MCF 10A (cell line): ENCODE measurements at regions of chr5 and their contacts with region 1.

Region 1: GRCh38 chr5:142713121-142713706 is 27.3 kb upstream of the FGF1 start:
- DNase-seq: peak; percentile 95
- H3K4me3 Mint-ChIP-seq: peak overlapping the region; percentile 77
- H3K27ac Mint-ChIP-seq: peak overlapping the region; percentile 10
- H3K4me1 Mint-ChIP-seq: peaks cover 19% of the 10 kb centered on the region
- H3K27me3 Mint-ChIP-seq: no peaks in the 10 kb centered on the region
- CTCF ChIP-seq: peak; percentile 99

Region 2: GRCh38 chr5:142627383-142628255 is 85.6 kb before region 1 on chr5:
- CTCF ChIA-PET with region 1: interaction called, 18 read pairs
- POLR2A ChIA-PET with region 1: interaction called, 3 read pairs
- intact Hi-C with region 1: no loop called
- DNase-seq: peak; percentile 42
- H3K4me3 Mint-ChIP-seq: no peak overlapping the region
- H3K27ac Mint-ChIP-seq: no peak overlapping the region
- H3K4me1 Mint-ChIP-seq: no peaks in the 10 kb centered on the region
- H3K27me3 Mint-ChIP-seq: no peaks in the 10 kb centered on the region
- CTCF ChIP-seq: no peak

Region 3: GRCh38 chr5:142685418-142686209 is 27.6 kb before region 1 on chr5 and contains the start of gene FGF1:
- CTCF ChIA-PET with region 1: interaction called, 1,243 read pairs
- POLR2A ChIA-PET with region 1: interaction called, 6 read pairs
- intact Hi-C with region 1: no loop called
- DNase-seq: peak; percentile 89
- H3K4me3 Mint-ChIP-seq: peak within 1 kb of the TSS; percentile 7
- H3K27ac Mint-ChIP-seq: peak within 1 kb of the TSS; percentile 70
- H3K4me1 Mint-ChIP-seq: peaks cover 43% of the 10 kb centered on the region
- H3K27me3 Mint-ChIP-seq: no peaks in the 10 kb centered on the region
- CTCF ChIP-seq: no peak
- total RNA-seq, gene FGF1: 0.34 and 0.65 TPM in 2 replicates

Region 4: GRCh38 chr5:142748568-142749249 is 35.5 kb after region 1 on chr5:
- CTCF ChIA-PET with region 1: interaction called, 253 read pairs
- POLR2A ChIA-PET with region 1: interaction called, 4 read pairs
- intact Hi-C with region 1: loop called (anchors 1 kb)
- DNase-seq: peak; percentile 84
- H3K4me3 Mint-ChIP-seq: no peak overlapping the region
- H3K27ac Mint-ChIP-seq: peak overlapping the region; percentile 20
- H3K4me1 Mint-ChIP-seq: peaks cover 44% of the 10 kb centered on the region
- H3K27me3 Mint-ChIP-seq: no peaks in the 10 kb centered on the region
- CTCF ChIP-seq: peak; percentile 87

Region 5: GRCh38 chr5:142860270-142860669 is 147.1 kb after region 1 on chr5:
- CTCF ChIA-PET with region 1: interaction called, 61 read pairs
- POLR2A ChIA-PET with region 1: interaction called, 3 read pairs
- intact Hi-C with region 1: no loop called
- DNase-seq: no peak
- H3K4me3 Mint-ChIP-seq: no peak overlapping the region
- H3K27ac Mint-ChIP-seq: no peak overlapping the region
- H3K4me1 Mint-ChIP-seq: peaks cover 22% of the 10 kb centered on the region
- H3K27me3 Mint-ChIP-seq: no peaks in the 10 kb centered on the region
- CTCF ChIP-seq: no peak

Region 6: DNA sequence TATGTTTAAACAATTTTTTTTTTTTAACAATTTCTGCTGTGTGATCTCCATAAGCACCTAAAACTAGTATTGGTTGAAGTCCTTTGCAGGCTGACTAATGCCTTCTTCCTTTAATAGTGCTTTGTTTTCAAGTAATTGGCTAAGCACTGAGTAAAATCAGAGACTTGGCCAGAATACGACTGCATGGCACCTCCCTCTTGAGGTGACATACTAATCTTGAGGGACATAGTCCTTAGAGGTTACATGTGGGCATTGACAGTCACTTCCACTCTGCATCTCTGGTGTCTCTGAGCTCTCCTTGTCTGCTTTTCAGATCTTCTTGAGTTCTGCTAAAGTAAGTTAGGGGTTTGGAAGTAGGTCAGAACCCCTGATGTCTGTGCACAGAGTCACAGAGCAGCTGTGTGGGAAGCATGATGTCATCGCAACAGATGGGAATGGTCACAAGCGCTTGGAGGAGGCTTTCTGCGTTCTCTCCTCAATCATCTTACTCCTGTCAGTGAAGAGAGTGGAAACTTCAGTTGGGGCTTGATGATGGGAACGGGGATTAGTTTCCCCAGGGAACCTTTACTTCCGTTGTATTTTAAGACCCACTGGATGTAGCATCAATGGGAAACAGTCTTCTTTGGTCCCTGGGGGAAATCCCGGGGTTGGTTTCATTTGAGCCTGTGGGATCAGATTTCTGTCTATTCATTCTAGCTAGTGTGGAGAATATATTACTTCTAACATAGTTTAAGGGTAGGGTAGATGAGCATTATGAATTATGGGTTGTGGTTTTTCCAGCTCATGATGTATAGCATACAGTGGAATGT is 193.9 kb after region 1 on chr5:
- CTCF ChIA-PET with region 1: interaction called, 180 read pairs
- POLR2A ChIA-PET with region 1: no interaction called
- intact Hi-C with region 1: no loop called
- DNase-seq: no peak
- H3K4me3 Mint-ChIP-seq: no peak overlapping the region
- H3K27ac Mint-ChIP-seq: no peak overlapping the region
- H3K4me1 Mint-ChIP-seq: peaks cover 8% of the 10 kb centered on the region
- H3K27me3 Mint-ChIP-seq: no peaks in the 10 kb centered on the region
- CTCF ChIP-seq: no peak